ENCODE measurements at regions of chr3 and their contacts with region 1.

Region 1: DNA sequence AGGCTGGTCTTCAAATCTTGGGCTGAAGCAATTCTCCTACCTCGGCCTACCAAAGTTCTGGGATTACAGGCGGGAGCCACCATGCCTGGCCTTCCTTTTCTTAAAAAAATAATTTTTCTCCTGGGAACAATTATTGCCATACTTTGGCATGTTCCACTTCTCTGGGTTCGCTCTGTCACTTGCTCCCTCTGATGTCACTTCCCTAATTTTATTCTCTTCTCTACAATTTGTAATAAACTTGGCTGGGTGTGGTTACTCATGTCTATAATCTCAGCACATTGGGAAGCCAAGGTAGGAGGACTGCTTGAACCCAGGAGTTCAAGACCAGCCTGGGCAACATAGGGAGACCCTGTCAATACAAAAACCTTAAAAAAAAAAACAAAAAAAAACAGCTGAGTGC is 6.1 kb upstream of the IMPDH2 start:
- DNase-seq: no peak
- H3K4me3 ChIP-seq: no peak overlapping the region
- H3K27ac ChIP-seq: no peak overlapping the region
- H3K4me1 ChIP-seq: no peaks in the 10 kb centered on the region
- H3K27me3 ChIP-seq: no peaks in the 10 kb centered on the region
- CTCF ChIP-seq: no peak

Region 2: GRCh38 chr3:49053543-49053942 is 18.3 kb after region 1 on chr3:
- CTCF ChIA-PET with region 1: no interaction called
- POLR2A ChIA-PET with region 1: interaction called, 12 read pairs
- intact Hi-C with region 1: no loop called
- DNase-seq: no peak
- H3K4me3 ChIP-seq: no peak overlapping the region
- H3K27ac ChIP-seq: no peak overlapping the region
- H3K4me1 ChIP-seq: no peaks in the 10 kb centered on the region; the same call in 1 of the 2 replicates
- H3K27me3 ChIP-seq: no peaks in the 10 kb centered on the region
- CTCF ChIP-seq: no peak

Region 3: GRCh38 chr3:49104483-49105291 is 69.4 kb after region 1 on chr3 and contains the start of gene QARS1:
- CTCF ChIA-PET with region 1: interaction called, 13 read pairs
- POLR2A ChIA-PET with region 1: no interaction called
- intact Hi-C with region 1: no loop called
- DNase-seq: peak; percentile 88 to 93
- H3K4me3 ChIP-seq: peak within 1 kb of the TSS; percentile 96
- H3K27ac ChIP-seq: peak within 1 kb of the TSS; percentile 58
- H3K4me1 ChIP-seq: peaks cover 5% of the 10 kb centered on the region
- H3K27me3 ChIP-seq: no peaks in the 10 kb centered on the region
- CTCF ChIP-seq: no peak
- total RNA-seq, gene QARS1: 334 and 337 TPM in 2 replicates

Measured in PC-9 (cell line).